Upper lobe of right lung (tissue), 1 donor: ENCODE measurements at regions of chr17 and their contacts with region 1.

Region 1: DNA sequence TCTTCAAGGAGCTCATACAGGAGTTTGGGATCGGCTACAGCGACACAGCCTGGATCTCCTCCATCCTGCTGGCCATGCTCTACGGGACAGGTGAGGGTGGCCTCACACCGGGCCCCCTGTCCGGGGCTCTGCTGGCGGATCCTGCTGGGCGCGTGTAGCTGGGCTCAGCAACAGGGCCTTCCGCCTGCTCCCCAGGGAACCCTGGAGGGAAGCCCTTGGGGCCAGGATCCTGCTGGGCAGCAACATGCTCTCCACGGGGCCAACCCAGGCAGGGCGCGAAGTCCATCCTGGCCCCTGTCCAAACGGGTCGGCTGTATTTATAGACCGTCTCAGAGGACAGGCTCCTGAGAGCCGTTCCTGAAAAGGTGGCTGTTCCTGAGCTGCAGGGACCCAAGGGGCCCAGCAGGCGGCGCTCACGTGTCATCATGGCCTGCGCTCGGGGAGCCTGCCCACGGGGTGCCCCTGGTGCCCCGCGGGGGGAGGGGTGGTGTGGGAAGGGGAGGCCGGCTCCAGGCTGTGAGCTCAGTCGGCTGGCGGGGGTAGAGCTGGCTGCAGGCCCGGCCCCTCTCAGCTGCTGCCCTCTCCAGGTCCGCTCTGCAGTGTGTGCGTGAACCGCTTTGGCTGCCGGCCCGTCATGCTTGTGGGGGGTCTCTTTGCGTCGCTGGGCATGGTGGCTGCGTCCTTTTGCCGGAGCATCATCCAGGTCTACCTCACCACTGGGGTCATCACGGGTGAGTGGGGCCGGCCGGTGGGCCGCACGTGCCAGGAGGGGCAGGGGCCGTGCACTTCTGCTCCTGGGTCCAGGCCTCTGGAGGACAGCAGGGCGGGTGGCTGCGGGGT is 7.5 kb downstream of the SLC16A3 start:
- DNase-seq: peak; percentile 85
- ATAC-seq: peak; percentile 40
- H3K4me3 ChIP-seq: no peak overlapping the region
- H3K27ac ChIP-seq: peak overlapping the region; percentile 0
- H3K4me1 ChIP-seq: peaks cover 65% of the 10 kb centered on the region
- H3K27me3 ChIP-seq: no peaks in the 10 kb centered on the region
- CTCF ChIP-seq: peak; percentile 93

Region 2: GRCh38 chr17:82320956-82321927 is 84.9 kb after region 1 on chr17:
- intact Hi-C with region 1: loop called (anchors 5 kb)
- DNase-seq: peak; percentile 77
- ATAC-seq: peak; percentile 63
- H3K4me3 ChIP-seq: no peak overlapping the region
- H3K27ac ChIP-seq: no peak overlapping the region
- H3K4me1 ChIP-seq: peaks cover 9% of the 10 kb centered on the region
- H3K27me3 ChIP-seq: no peaks in the 10 kb centered on the region
- CTCF ChIP-seq: peak; percentile 86